ENCODE measurements at regions of chr7 and their contacts with region 1.

Region 1: GRCh38 chr7:22697876-22698606 is 29.0 kb upstream of the IL6 start:
- DNase-seq: no peak
- H3K4me3 Mint-ChIP-seq: no peak overlapping the region
- H3K27ac Mint-ChIP-seq: no peak overlapping the region
- H3K4me1 Mint-ChIP-seq: peaks cover 32% of the 10 kb centered on the region
- H3K27me3 Mint-ChIP-seq: no peaks in the 10 kb centered on the region
- CTCF ChIP-seq: no peak

Region 2: DNA sequence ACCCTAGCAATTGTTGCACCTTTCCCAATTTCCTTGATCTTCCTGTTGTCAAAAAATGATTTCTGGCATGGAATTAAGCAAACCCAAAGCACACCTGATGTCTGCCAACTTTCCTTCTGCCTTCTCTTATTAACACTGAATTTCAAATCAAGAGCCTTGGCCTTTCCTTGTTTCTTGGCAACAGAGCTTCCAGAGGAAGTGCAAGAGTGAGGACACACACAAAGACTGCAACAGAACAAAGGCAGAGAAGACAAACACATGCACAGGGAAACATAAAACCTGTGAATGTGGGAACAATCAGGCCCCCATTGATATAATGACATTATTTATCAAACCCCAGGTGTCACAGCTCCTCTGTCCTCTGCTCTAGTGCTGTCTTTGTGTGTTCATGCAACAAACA is 44.1 kb before region 1 on chr7:
- CTCF ChIA-PET with region 1: no interaction called
- intact Hi-C with region 1: no loop called
- DNase-seq: no peak
- H3K4me3 Mint-ChIP-seq: no peak overlapping the region
- H3K27ac Mint-ChIP-seq: no peak overlapping the region
- H3K4me1 Mint-ChIP-seq: peaks cover 32% of the 10 kb centered on the region
- H3K27me3 Mint-ChIP-seq: no peaks in the 10 kb centered on the region
- CTCF ChIP-seq: no peak

Region 3: DNA sequence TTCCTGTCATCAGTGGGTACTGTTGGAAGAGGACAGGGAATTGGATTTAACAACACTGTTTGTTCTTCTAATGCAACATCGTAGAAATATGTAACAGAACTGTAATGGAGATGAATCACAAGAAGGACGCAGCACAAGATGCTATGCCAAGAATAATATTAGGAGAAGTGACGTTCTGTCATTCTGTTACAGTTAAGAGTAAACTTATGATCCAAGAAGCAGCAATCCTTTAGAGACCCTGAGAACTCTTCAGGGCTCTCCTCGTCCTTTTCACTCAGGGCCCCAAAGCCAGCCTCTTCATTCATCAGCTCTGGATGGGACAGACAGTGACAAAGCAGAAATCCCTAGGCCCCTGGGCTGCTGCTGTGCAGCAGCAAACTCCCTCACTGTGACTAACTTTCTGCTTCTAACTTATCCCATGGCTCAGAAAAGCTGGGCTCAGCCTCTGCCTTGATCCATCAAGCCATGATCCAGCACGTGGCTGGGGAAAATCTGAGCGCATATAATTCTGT is 20.2 kb after region 1 on chr7:
- CTCF ChIA-PET with region 1: interaction called, 12 read pairs
- intact Hi-C with region 1: no loop called
- DNase-seq: peak; percentile 27
- H3K4me3 Mint-ChIP-seq: no peak overlapping the region
- H3K27ac Mint-ChIP-seq: peak overlapping the region; percentile 64
- H3K4me1 Mint-ChIP-seq: peaks cover 39% of the 10 kb centered on the region
- H3K27me3 Mint-ChIP-seq: no peaks in the 10 kb centered on the region
- CTCF ChIP-seq: no peak

Measured in Calu3 (cell line).